Mammary epithelial cell (primary cell): ENCODE measurements at regions of chr3 and their contacts with region 1.

Region 1: GRCh38 chr3:32764481-32764880 is 53.3 kb upstream of the TRIM71 start:
- DNase-seq: no peak
- H3K4me3 ChIP-seq: no peak overlapping the region
- H3K27ac ChIP-seq: no peak overlapping the region
- H3K4me1 ChIP-seq: no peaks in the 10 kb centered on the region
- H3K27me3 ChIP-seq: no peaks in the 10 kb centered on the region
- CTCF ChIP-seq: no peak

Region 2: GRCh38 chr3:32684800-32685542 is 79.5 kb before region 1 on chr3 and contains the start of gene CNOT10:
- CTCF ChIA-PET with region 1: no interaction called
- dilution Hi-C with region 1: no loop called
- in situ Hi-C with region 1: no loop called
- intact Hi-C with region 1: no loop called
- DNase-seq: peak; percentile 93
- H3K4me3 ChIP-seq: peak within 1 kb of the TSS; percentile 73 to 94 (median 82)
- H3K27ac ChIP-seq: peak within 1 kb of the TSS; percentile 66
- H3K4me1 ChIP-seq: peaks cover 14% of the 10 kb centered on the region
- H3K27me3 ChIP-seq: no peaks in the 10 kb centered on the region
- CTCF ChIP-seq: peak in 1 of 2 donors; percentile 35
- total RNA-seq, gene CNOT10: 21.3 to 31.6 TPM

Region 3: GRCh38 chr3:32709346-32709745 is 55.1 kb before region 1 on chr3:
- CTCF ChIA-PET with region 1: no interaction called
- dilution Hi-C with region 1: loop called (anchors 5 kb)
- in situ Hi-C with region 1: no loop called
- intact Hi-C with region 1: no loop called
- DNase-seq: no peak
- H3K4me3 ChIP-seq: no peak overlapping the region
- H3K27ac ChIP-seq: no peak overlapping the region
- H3K4me1 ChIP-seq: no peaks in the 10 kb centered on the region
- H3K27me3 ChIP-seq: no peaks in the 10 kb centered on the region
- CTCF ChIP-seq: no peak